ENCODE measurements at regions of chr1 and their contacts with region 1.

Region 1: DNA sequence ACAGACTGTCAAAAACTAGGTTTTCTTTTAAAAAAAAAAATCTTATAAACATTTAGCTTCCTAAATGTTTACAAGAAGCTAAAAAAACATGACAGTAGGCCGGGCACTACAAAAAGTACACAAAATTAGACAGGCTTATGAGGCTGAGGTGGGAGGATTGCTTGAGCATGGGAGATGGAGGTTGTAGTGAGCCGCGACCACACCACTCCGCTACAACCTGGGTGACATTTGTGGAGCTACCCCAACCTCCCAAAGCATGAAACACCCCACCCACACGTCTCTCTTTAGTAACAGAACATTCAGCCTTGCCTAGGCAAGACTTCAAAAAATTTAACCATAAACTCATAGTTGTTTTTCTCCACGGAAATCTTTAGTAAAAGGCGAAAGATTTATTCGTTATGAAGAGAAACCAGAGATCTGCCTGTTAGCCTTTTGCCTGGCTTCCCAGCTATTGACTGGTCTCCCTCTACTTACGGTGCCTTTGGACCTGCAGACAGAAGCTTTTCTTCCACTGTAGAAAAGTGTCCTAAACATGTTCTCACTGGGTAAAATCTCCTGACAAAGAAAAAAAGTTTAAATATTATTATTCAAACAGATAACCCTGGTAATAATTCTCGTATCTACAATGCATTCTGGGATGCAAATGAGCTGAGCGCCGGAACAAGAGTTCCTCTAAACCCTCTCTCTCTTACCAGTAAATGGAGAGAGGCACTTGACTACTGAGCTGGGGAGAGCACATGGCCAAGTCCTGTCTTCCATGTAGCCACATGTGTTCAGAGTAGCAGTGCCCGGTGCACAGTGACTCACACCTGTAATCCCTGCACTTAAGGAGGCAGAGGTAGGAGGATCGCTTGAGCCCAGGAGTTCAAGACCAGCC is 9.2 kb downstream of the RNU5D-1 start:
- DNase-seq: peak; percentile 80

Region 2: DNA sequence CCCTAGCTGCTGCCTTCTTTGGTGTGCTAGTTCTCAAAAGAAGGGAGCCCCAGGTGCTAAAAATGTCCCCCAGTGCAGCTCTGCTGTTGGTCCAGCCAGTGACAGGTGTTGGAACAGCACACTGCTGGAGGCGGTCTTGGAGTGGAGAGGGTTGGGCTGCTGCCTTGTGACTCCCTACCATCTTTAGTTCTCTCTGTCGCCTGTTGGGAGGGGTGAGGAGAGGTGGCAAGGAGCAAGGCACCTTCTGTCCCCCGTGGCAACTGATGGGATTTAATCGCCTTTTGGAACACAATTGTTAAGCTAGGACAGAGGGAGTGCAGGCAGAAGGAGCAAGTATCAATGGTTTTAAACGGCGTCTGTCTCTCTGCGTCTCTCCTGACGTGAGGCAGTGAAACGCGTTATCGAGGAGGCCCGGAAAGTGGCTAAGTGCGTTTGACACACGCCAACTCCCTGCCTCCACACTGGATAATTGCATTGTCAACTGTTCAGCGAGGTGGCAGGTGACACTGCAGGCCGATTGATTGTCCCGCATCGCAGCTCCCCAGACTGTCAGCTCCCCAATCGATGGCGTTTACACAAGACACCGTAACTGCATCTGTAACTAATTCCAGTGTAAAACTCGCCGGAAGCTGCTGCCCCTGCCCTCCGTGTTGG is 81.4 kb before region 1 on chr1:
- CTCF ChIA-PET with region 1: no interaction called
- POLR2A ChIA-PET with region 1: no interaction called
- DNase-seq: no peak

Region 3: DNA sequence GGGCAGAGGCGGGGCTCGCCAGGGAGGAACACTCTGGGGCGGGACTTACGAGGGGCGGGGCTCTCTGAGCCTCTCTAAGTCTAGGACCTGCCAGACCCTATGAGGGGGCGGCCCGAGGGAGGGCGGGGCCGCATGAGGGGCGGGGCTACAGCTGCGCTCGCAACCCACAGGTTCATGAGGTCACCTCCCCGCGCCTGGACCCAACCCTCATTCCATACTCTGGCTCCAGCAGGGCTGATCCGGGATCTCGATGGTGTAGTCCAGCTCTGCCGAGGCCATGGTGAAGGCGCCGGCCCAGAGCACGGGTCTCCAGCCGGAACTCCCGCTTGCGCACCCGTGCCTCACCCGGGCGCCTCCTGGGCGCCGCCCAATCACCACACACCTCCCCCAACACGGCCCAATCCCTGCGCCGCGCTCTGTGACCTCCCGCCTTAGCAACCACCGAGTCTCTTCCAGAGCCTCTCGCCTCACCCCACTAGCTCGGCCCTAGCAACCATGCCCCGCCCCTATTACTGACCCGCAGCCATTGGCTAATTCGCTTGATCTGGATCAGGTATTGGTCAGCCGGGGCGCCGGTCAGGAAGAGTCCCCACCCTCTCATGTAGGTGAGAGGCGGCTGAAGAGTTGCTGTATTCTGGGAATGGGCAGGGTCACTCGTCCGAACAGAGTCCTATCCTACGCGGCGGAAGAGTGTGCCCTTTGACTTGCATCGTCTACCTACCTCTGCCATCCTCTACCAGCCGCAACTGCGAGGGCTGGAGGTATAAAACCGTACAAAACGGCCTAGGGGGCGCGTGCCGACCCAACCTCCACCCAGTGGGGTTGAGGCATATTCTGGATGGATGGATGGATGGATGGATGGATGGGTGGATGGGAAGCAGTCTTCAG is 47.4 kb before region 1 on chr1 and contains the starts of genes ARMH1 and TMEM53:
- CTCF ChIA-PET with region 1: interaction called, 4 read pairs
- POLR2A ChIA-PET with region 1: interaction called, 17 read pairs
- DNase-seq: peak; percentile 97

Region 4: GRCh38 chr1:44707959-44708831 is 13.5 kb before region 1 on chr1:
- CTCF ChIA-PET with region 1: interaction called, 4 read pairs
- POLR2A ChIA-PET with region 1: interaction called, 27 read pairs
- DNase-seq: peak; percentile 69

Region 5: DNA sequence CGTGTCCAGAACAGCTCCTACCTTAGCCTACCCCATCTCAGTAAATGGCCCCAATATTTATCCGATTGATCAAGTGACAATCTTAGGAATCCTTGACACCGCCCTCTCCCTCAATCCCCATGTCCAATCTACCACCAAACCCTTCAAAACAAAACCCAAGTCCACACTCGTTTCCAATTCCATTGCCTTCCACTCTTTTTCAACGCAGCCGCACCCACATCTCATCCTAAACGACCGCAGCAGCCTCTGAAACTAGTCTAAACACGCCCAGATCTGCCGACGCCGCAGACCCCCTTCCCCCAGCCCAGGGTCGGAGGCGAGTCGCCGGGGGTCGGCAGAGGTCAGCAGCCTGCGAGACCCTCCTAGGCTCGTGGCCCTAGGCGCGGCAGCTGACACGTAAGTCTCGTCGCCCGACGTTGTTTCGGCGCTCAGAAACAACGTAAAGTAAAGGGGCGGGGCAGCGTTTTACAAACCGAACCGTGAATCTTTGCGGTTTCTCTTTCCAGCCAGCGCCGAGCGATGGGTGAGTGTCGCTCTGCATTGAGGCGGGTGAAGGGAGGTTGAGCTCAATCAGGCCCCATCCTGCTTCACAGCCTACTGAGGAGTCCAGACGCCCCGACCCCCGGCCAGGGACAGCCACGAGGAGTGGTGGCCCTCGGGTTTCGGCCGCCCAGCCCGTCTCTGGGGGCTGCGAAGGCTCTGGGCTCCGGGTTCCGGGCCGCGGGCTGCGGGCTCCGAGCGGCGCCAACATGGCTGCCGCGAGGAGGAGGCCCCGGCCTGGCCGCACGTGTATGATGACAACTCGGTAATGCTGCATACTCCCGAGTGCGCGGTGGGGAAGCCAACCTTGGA is 53.6 kb after region 1 on chr1 and contains the start of gene RPS8:
- CTCF ChIA-PET with region 1: interaction called, 3 read pairs
- POLR2A ChIA-PET with region 1: interaction called, 29 read pairs
- DNase-seq: peak; percentile 84

Region 6: DNA sequence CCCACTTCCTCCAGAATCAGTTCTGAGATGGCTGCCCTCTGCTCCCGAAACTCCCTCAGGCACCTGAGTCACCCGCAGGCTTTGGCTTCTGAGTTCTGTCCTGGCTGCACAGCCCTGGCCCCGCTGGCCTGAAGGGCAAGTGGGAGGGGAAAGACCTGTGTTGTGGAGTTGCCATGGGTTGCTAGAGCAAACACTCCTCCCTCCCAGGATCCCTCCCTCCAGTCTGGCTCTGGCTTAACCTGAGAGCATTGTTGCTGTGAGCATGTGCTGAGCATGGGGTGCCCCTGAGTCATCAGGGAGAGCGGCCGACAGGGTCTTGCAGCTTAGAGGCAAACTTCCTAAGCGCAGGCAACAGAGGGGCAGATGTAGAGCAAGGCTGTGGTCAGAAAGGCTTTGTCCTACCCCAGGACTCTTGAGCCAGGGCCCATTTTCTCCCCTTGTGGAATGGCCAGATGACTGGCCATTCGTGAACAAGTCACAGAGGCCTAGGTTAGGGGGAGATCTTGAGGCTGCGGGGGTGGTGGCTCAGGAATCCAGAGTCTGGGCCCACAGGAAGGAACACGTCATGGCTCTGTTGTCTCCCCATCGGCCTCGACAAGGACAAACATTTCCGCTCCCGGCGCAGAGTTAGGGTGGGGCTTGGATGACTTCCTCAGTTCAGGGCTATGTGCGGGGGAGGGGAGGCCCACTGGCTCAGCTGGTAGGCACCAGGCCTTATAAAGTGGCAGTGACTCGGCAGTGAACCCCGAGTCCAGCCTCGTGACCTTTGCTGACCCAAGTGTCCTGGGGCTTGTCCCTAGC is 85.7 kb after region 1 on chr1 and contains the start of gene DYNLT4:
- CTCF ChIA-PET with region 1: no interaction called
- POLR2A ChIA-PET with region 1: interaction called, 17 read pairs
- DNase-seq: no peak

Region 7: DNA sequence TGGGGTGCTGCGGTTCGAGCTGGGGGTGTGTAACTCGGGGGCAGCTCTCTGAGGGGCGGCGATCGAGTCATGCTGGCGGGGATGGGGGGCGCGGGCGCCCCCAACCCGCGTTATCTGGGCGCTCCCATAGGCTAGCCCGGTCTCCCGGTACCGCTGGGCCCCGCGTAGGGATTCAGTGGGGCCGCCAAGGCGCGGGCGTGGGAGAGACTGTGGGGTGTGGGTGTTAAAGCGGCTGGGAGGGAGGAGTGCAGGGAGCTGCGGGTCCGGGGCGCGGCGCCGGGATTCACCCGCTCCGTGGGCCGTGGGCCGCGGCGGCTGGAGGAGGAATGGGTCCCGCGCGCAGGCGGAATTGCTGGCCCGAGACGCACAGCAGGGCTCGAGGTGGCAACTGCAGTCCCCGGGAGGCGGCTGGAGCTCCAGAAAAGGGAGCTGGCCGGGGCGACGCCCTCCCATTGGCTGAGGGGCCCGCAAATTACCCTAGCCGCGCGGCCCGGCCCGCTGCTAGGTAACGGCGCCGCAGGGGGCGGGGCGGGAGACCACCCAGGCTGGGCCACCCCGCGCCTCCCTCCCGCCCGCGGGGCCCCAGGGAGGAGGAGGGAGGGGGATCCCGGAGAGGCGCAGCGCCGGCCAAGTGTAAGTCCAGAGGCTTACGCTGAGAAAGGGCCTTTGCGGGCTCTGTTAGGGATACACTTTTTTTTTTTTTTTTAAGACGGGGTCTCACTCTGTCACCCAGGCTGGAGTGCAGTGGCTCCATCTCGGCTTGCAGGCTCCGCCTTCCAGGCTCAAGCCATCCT is 121.3 kb after region 1 on chr1 and contains the start of gene PTCH2:
- CTCF ChIA-PET with region 1: no interaction called
- POLR2A ChIA-PET with region 1: interaction called, 12 read pairs
- DNase-seq: peak; percentile 90

Region 8: GRCh38 chr1:45011837-45012638 is 290.3 kb after region 1 on chr1 and contains the start of gene UROD:
- CTCF ChIA-PET with region 1: no interaction called
- POLR2A ChIA-PET with region 1: interaction called, 37 read pairs
- DNase-seq: peak; percentile 95